ENCODE measurements at regions of chr22 and their contacts with region 1.

Region 1: GRCh38 chr22:36775964-36776669 is at the start of gene IFT27:
- DNase-seq: peak; percentile 81
- ATAC-seq: peak; percentile 89
- H3K4me3 Mint-ChIP-seq: peak within 1 kb of the TSS; percentile 88
- H3K27ac Mint-ChIP-seq: peak within 1 kb of the TSS; percentile 89
- H3K4me1 Mint-ChIP-seq: peaks cover 14% of the 10 kb centered on the region
- H3K27me3 Mint-ChIP-seq: no peaks in the 10 kb centered on the region
- CTCF ChIP-seq: no peak
- total RNA-seq, gene IFT27: 26.2 and 32.7 TPM in 2 replicates

Region 2: GRCh38 chr22:36546092-36546804 is 229.9 kb before region 1 on chr22:
- CTCF ChIA-PET with region 1: interaction called, 4 read pairs
- POLR2A ChIA-PET with region 1: interaction called, 3 read pairs
- intact Hi-C with region 1: loop called (anchors 2 kb)
- DNase-seq: no peak
- ATAC-seq: peak; percentile 82
- H3K4me3 Mint-ChIP-seq: no peak overlapping the region
- H3K27ac Mint-ChIP-seq: no peak overlapping the region
- H3K4me1 Mint-ChIP-seq: peaks cover 28% of the 10 kb centered on the region
- H3K27me3 Mint-ChIP-seq: no peaks in the 10 kb centered on the region
- CTCF ChIP-seq: no peak

Region 3: GRCh38 chr22:36552289-36552688 is 223.8 kb before region 1 on chr22:
- CTCF ChIA-PET with region 1: interaction called, 6 read pairs
- POLR2A ChIA-PET with region 1: interaction called, 7 read pairs
- intact Hi-C with region 1: loop called (anchors 1 kb)
- DNase-seq: no peak
- ATAC-seq: peak; percentile 93
- H3K4me3 Mint-ChIP-seq: peak overlapping the region; percentile 44
- H3K27ac Mint-ChIP-seq: peak overlapping the region; percentile 91
- H3K4me1 Mint-ChIP-seq: peaks cover 53% of the 10 kb centered on the region
- H3K27me3 Mint-ChIP-seq: no peaks in the 10 kb centered on the region
- CTCF ChIP-seq: no peak

Region 4: DNA sequence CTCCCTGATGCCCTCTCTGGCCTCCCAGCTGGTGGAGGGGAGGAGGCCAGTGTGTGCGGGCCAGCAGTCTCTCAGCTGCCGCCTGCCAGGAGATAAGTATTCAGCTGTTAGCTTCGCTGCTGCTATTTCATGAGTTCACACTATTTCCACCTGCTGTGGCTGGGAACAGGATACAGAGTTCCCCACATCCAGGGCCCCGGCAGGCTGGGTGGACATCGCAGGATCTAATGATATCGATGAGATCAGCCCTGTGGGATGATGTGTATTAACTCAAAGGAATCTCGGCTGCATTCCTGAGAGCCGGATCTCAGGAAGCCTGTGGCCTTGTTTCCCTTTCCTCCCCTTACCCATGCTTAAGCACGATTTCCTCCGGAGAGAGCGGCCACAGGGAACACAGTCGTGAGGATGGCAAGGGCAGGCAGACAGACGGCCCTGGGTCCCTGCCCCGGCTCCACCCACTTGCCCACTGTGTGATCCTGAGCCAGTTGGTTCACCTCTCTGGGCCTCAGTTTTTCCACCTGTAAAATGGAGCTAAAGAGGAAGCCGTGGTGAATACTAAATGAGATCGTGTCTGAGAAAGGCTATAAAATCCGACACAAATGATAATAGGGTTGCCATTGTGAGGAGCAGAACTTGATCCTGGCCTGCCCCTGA is 47.2 kb after region 1 on chr22:
- CTCF ChIA-PET with region 1: no interaction called
- POLR2A ChIA-PET with region 1: no interaction called
- intact Hi-C with region 1: no loop called
- DNase-seq: no peak
- ATAC-seq: no peak
- H3K4me3 Mint-ChIP-seq: no peak overlapping the region
- H3K27ac Mint-ChIP-seq: no peak overlapping the region
- H3K4me1 Mint-ChIP-seq: no peaks in the 10 kb centered on the region
- H3K27me3 Mint-ChIP-seq: peaks cover 48% of the 10 kb centered on the region
- CTCF ChIP-seq: no peak